ENCODE measurements at regions of chr14 and their contacts with region 1.

Region 1: DNA sequence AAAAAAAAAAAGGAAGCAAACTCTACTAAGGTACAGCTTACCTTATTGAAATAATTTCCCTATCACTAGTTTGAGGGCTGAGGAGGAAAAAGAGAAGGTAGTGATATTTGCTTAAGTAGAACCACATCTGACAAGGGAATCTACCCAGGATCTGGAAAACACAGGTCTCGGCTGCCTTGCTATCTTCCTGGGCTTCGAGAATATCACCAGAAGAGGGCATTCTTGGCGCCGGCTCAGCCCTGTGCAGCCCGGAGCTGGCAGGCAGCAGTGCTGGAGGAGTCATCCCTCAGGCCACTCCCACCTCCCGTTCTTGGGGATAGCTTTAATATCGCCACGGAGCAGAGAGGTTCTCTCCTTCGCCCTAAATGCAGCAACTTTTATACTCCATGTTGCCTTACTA is 1181.2 kb downstream of the VRK1 start:
- DNase-seq: peak; percentile 33 to 83 (median 72)
- ATAC-seq: peak; percentile 84
- H3K4me3 ChIP-seq: peak overlapping the region; percentile 91
- H3K4me3 Mint-ChIP-seq: peak overlapping the region; percentile 85 to 99 (median 93)
- H3K27ac ChIP-seq: peak overlapping the region; percentile 85
- H3K27ac Mint-ChIP-seq: peak overlapping the region; percentile 68 to 99 (median 92)
- H3K4me1 ChIP-seq: peaks cover 25 to 40% of the 10 kb centered on the region in 2 donors
- H3K4me1 Mint-ChIP-seq: peaks cover 32 to 64% (median 50%) of the 10 kb centered on the region in 7 donors
- H3K27me3 ChIP-seq: no peaks in the 10 kb centered on the region
- H3K27me3 Mint-ChIP-seq: no peaks in the 10 kb centered on the region

Region 2: GRCh38 chr14:97602438-97603117 is 375.8 kb before region 1 on chr14:
- CTCF ChIA-PET with region 1: interaction called, 9 read pairs
- POLR2A ChIA-PET with region 1: interaction called, 24 read pairs
- intact Hi-C with region 1: loop called (anchors 2 to 5 kb)
- DNase-seq: peak; percentile 39 to 92 (median 89)
- ATAC-seq: peak; percentile 94
- H3K4me3 ChIP-seq: peak overlapping the region; percentile 37
- H3K4me3 Mint-ChIP-seq: no peak overlapping the region
- H3K27ac ChIP-seq: peak overlapping the region; percentile 80
- H3K27ac Mint-ChIP-seq: no peak overlapping the region
- H3K4me1 ChIP-seq: peaks cover 57 to 64% of the 10 kb centered on the region in 2 donors
- H3K4me1 Mint-ChIP-seq: peaks cover 0 to 31% (median 4%) of the 10 kb centered on the region in 7 donors
- H3K27me3 ChIP-seq: no peaks in the 10 kb centered on the region
- H3K27me3 Mint-ChIP-seq: no peaks in the 10 kb centered on the region

Region 3: DNA sequence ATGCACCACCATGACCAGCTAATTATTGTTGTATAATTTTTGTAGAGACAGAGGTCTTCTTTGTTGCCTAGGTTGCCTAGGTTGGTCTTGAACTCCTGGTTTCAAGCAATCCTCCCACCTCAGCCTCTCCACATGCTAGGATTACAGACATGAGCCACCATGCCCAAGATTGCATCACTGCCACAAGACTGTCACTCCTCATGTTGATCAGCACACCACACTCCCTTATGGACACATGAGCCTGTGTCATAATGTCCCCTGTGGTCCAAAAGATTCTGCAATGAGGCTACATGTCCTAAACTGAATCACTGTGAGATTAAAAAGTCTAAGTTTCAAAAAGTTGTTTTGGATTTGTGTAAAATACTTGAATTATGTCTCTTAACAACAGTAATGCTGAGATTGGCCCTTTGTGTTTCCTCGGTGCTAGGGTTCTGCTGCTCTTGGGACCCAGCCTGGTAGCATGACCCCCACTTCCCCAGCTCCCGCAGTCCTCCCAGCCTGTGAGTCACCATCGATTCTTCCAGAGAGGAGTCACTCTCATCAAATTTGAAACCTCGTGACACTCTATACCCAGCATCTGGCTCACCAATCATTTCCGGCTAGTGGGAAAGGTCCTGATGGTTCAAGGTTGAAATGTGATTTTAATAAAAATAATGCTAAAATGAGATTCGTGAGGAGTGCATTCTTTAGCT is 290.3 kb before region 1 on chr14:
- CTCF ChIA-PET with region 1: no interaction called
- POLR2A ChIA-PET with region 1: no interaction called
- intact Hi-C with region 1: no loop called
- DNase-seq: no peak
- ATAC-seq: no peak
- H3K4me3 ChIP-seq: no peak overlapping the region
- H3K4me3 Mint-ChIP-seq: no peak overlapping the region
- H3K27ac ChIP-seq: no peak overlapping the region
- H3K27ac Mint-ChIP-seq: peak overlapping the region in 1 of 9 donors; percentile 63
- H3K4me1 ChIP-seq: no peaks in the 10 kb centered on the region
- H3K4me1 Mint-ChIP-seq: peaks cover 9 to 32% (median 27%) of the 10 kb centered on the region in 7 donors
- H3K27me3 ChIP-seq: no peaks in the 10 kb centered on the region
- H3K27me3 Mint-ChIP-seq: no peaks in the 10 kb centered on the region

Region 4: GRCh38 chr14:97878727-97879126 is 99.6 kb before region 1 on chr14:
- CTCF ChIA-PET with region 1: no interaction called
- POLR2A ChIA-PET with region 1: interaction called, 4 read pairs
- intact Hi-C with region 1: loop called in 1 of 2 experiments (anchors 2 kb)
- DNase-seq: peak in 7 of 9 donors; percentile 31 to 77 (median 70)
- ATAC-seq: peak; percentile 78
- H3K4me3 ChIP-seq: no peak overlapping the region
- H3K4me3 Mint-ChIP-seq: peak overlapping the region in 9 of 10 donors; percentile 2 to 70 (median 41)
- H3K27ac ChIP-seq: peak overlapping the region; percentile 51
- H3K27ac Mint-ChIP-seq: peak overlapping the region; percentile 81 to 99 (median 90)
- H3K4me1 ChIP-seq: peaks cover 3 to 36% of the 10 kb centered on the region in 2 donors
- H3K4me1 Mint-ChIP-seq: peaks cover 12 to 75% (median 66%) of the 10 kb centered on the region in 7 donors
- H3K27me3 ChIP-seq: no peaks in the 10 kb centered on the region
- H3K27me3 Mint-ChIP-seq: peaks cover 0 to 3% (median 0%) of the 10 kb centered on the region in 5 donors

Region 5: DNA sequence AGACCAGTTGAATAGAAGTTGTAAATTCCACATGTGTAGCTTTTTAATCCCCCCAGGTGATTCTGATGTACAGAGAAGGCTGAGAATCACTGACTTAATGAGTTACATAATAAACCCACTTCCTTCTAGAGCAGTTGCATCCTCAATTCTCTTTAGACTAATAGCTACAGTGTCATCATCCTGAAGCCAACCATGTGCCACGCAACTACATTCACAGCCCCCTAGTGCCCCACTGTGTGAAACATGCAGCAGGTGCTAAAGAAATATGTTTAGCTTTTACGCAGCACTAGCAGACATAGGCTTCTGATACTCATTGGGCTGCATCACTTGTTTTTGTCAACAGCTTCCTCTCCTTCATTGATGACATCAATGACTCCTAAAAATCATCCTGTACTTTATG is 125.4 kb after region 1 on chr14:
- CTCF ChIA-PET with region 1: no interaction called
- POLR2A ChIA-PET with region 1: interaction called, 5 read pairs
- intact Hi-C with region 1: loop called in 1 of 2 experiments (anchors 2 kb)
- DNase-seq: peak in 7 of 9 donors; percentile 29 to 73 (median 62)
- ATAC-seq: peak; percentile 81
- H3K4me3 ChIP-seq: no peak overlapping the region
- H3K4me3 Mint-ChIP-seq: peak overlapping the region in 1 of 10 donors; percentile 0
- H3K27ac ChIP-seq: no peak overlapping the region
- H3K27ac Mint-ChIP-seq: peak overlapping the region in 7 of 9 donors; percentile 1 to 64 (median 57)
- H3K4me1 ChIP-seq: peaks cover 0 to 16% of the 10 kb centered on the region in 2 donors
- H3K4me1 Mint-ChIP-seq: peaks cover 10 to 53% (median 35%) of the 10 kb centered on the region in 7 donors
- H3K27me3 ChIP-seq: no peaks in the 10 kb centered on the region
- H3K27me3 Mint-ChIP-seq: no peaks in the 10 kb centered on the region

Region 6: GRCh38 chr14:98198385-98198784 is 220.0 kb after region 1 on chr14:
- CTCF ChIA-PET with region 1: interaction called, 7 read pairs
- POLR2A ChIA-PET with region 1: interaction called, 56 read pairs
- intact Hi-C with region 1: loop called in 1 of 2 experiments (anchors 1 kb)
- DNase-seq: peak in 4 of 9 donors; percentile 25 to 43 (median 32)
- ATAC-seq: peak; percentile 67
- H3K4me3 ChIP-seq: peak overlapping the region; percentile 18
- H3K4me3 Mint-ChIP-seq: peak overlapping the region; percentile 18 to 84 (median 78)
- H3K27ac ChIP-seq: peak overlapping the region; percentile 33
- H3K27ac Mint-ChIP-seq: peak overlapping the region; percentile 74 to 100 (median 97)
- H3K4me1 ChIP-seq: peaks cover 43 to 80% of the 10 kb centered on the region in 2 donors
- H3K4me1 Mint-ChIP-seq: peaks cover 28 to 95% (median 86%) of the 10 kb centered on the region in 7 donors
- H3K27me3 ChIP-seq: no peaks in the 10 kb centered on the region
- H3K27me3 Mint-ChIP-seq: no peaks in the 10 kb centered on the region

Region 7: DNA sequence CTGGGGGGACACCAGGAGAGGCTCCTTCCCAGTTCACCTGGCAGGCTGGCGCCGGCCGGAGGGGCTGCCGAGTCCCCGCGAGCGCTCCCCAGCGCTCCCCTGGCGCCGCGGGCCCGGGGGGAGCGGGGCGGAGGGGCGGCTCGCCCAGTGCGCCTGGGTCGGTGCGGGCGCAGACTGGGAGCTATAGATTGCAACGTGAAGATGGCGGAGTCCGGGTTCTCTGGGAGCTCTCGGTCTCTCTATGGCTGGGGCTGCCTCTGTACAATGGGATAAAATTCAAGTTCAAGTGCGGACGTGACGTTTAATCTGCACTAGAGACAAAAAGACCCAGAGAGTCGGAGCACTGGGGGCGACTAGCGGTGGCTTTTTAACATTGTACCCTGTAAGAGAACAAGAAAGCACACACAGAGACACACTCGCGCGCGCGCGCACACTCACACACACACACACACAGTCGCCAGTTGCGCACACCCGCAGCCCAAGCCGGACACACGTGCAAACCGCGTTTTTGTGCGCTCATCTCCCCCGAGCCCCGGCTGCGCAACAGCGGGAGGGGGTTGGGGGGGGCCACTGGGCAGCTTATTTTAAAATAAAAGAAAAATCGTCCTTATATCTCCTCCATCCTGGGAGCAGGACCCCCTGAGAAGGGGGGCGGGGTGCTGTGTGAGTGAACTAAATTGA is 1293.8 kb after region 1 on chr14 and contains the start of gene BCL11B:
- CTCF ChIA-PET with region 1: interaction called, 11 read pairs
- POLR2A ChIA-PET with region 1: interaction called, 86 read pairs
- intact Hi-C with region 1: loop called (anchors 1 kb)
- DNase-seq: peak; percentile 63 to 94 (median 91)
- ATAC-seq: peak; percentile 89
- H3K4me3 ChIP-seq: peak within 1 kb of the TSS; percentile 94
- H3K4me3 Mint-ChIP-seq: peak within 1 kb of the TSS; percentile 92 to 100 (median 98)
- H3K27ac ChIP-seq: peak within 1 kb of the TSS; percentile 98
- H3K27ac Mint-ChIP-seq: peak within 1 kb of the TSS; percentile 91 to 99 (median 98)
- H3K4me1 ChIP-seq: peaks cover 6 to 12% of the 10 kb centered on the region in 2 donors
- H3K4me1 Mint-ChIP-seq: peaks cover 25 to 46% (median 34%) of the 10 kb centered on the region in 7 donors
- H3K27me3 ChIP-seq: no peaks in the 10 kb centered on the region
- H3K27me3 Mint-ChIP-seq: peaks cover 0 to 26% (median 0%) of the 10 kb centered on the region in 5 donors
- total RNA-seq, gene BCL11B: 96.3 to 269 (median 223) TPM